GM12878 (cell line): ENCODE measurements at regions of chr5 and their contacts with region 1.

Region 1: DNA sequence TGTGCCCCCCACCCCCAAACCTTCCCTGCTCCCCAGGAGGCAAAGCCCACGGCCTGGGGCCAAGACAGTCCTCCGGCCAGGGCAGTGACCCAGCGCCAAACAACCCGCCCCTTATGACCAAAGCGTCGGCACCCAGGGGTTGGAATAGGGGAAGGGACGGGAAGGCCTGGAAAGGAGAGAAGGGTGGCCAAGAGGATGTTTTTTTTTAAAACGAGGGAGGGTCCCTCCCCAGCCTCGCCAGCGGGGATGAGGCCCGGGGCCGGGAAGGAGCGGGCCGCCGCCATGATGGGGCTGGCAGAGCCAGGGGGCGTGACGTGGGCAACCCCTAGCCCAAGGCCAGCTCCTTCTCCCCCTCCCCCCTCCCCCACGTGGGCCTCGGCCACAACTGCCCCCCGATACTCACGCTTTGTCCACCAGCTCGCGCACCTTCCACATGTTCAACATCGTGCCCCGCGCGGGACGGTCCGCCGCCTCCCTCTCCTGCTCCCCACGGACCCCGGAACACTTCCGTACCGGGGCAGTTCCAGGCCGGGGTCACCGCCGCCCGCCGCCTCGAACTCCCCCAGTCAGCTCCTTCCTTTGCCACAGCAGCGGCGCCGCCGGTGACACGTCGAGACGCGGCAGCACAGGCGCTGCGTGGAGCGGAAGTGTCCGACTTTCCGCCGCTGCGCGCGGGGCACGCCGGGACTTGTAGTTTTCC is at the start of gene CLINT1:
- DNase-seq: no peak
- ATAC-seq: peak; percentile 69
- H3K4me3 ChIP-seq: peak within 1 kb of the TSS; percentile 87
- H3K27ac ChIP-seq: peak within 1 kb of the TSS; percentile 45
- H3K4me1 ChIP-seq: peaks cover 29% of the 10 kb centered on the region
- H3K27me3 ChIP-seq: no peaks in the 10 kb centered on the region
- CTCF ChIP-seq: no peak
- EP300 ChIP-seq: 0 out of 4 replicates have a peak, but pooled peaks of 1 of the 2 experiments have one; percentile 4
- POLR2A ChIP-seq: peak; percentile 82
- RAD21 ChIP-seq: no peak
- polyA plus RNA-seq, gene CLINT1: 30.0 to 40.2 TPM

Region 2: GRCh38 chr5:157828944-157829632 is 29.6 kb before region 1 on chr5:
- CTCF ChIA-PET with region 1: interaction called, 48 read pairs
- POLR2A ChIA-PET with region 1: interaction called, 5 read pairs
- RAD21 ChIA-PET with region 1: interaction called, 12 read pairs
- SMC1A ChIA-PET with region 1: interaction called, 14 read pairs
- in situ Hi-C with region 1: no loop called
- intact Hi-C with region 1: no loop called
- DNase-seq: no peak
- ATAC-seq: peak; percentile 71
- H3K4me3 ChIP-seq: no peak overlapping the region
- H3K27ac ChIP-seq: no peak overlapping the region
- H3K4me1 ChIP-seq: peaks cover 8% of the 10 kb centered on the region
- H3K27me3 ChIP-seq: no peaks in the 10 kb centered on the region
- CTCF ChIP-seq: peak; percentile 34 to 52 (median 35); a peak in 5 of 6 replicates
- EP300 ChIP-seq: no peak
- POLR2A ChIP-seq: no peak
- RAD21 ChIP-seq: no peak

Region 3: DNA sequence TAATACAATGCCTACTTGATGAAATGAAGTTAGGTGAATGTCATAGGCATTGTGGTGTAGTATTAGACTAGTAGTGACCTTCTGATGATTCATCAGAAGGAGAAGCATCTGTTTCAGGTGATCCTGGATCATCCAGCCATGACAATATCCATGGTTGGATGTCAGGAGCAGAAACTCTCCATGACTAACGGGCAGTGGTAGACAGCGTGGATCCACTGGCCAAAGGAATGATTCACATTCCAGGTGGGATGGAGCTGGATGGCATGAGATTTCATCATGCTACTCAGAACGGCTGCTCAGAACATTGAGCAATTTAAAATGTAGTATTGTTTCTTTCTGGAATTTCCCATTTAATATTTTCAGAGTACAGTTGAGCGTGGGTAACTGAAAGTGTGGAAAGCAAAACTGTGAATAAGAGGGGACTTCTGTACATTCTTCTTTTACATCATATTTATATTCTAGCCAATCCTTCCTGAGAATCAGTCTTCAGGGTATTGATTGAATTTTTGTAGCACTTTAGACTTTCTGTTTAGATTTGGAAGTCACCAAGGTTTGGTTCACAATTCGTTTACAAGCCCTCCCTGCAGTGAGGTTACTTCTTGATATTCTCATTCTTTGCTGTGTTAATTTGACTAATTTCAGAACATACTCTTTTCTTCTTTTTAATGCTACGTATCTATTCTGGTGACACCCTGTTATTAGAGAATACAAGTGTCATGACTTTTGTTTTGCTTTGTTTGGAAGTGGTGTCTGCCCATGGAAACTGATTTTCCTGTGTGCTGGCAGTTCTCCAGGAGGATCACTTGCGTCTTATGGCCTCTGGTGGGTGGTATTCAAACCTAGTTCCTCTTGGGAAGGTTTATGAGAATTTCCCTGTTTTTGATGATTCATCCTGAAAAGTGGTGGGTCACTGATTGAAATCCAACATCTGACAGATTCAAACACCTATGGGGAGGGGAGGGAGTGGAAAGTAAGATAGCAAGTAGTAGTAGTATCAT is 12.5 kb after region 1 on chr5:
- CTCF ChIA-PET with region 1: interaction called, 6 read pairs
- POLR2A ChIA-PET with region 1: interaction called, 6 read pairs
- RAD21 ChIA-PET with region 1: interaction called, 14 read pairs
- SMC1A ChIA-PET with region 1: interaction called, 21 read pairs
- in situ Hi-C with region 1: no loop called
- intact Hi-C with region 1: loop called (anchors 1 kb)
- DNase-seq: no peak
- ATAC-seq: peak; percentile 78
- H3K4me3 ChIP-seq: no peak overlapping the region
- H3K27ac ChIP-seq: no peak overlapping the region
- H3K4me1 ChIP-seq: peaks cover 15% of the 10 kb centered on the region
- H3K27me3 ChIP-seq: peaks cover 0 to 6% of the 10 kb centered on the region in 2 experiments; a peak in 2 of 4 replicates
- CTCF ChIP-seq: no peak
- EP300 ChIP-seq: peak; percentile 13 to 27; a peak in 2 of 4 replicates
- POLR2A ChIP-seq: no peak
- RAD21 ChIP-seq: no peak

Region 4: GRCh38 chr5:157917899-157918809 is 59.5 kb after region 1 on chr5:
- CTCF ChIA-PET with region 1: interaction called, 166 read pairs
- POLR2A ChIA-PET with region 1: interaction called, 7 read pairs
- RAD21 ChIA-PET with region 1: interaction called, 66 read pairs
- SMC1A ChIA-PET with region 1: interaction called, 150 read pairs
- in situ Hi-C with region 1: loop called (anchors 5 kb)
- intact Hi-C with region 1: loop called (anchors 1 kb)
- DNase-seq: no peak
- ATAC-seq: peak; percentile 92
- H3K4me3 ChIP-seq: no peak overlapping the region
- H3K27ac ChIP-seq: no peak overlapping the region
- H3K4me1 ChIP-seq: no peaks in the 10 kb centered on the region; the same call in 1 of the 2 replicates
- H3K27me3 ChIP-seq: no peaks in the 10 kb centered on the region
- CTCF ChIP-seq: peak; percentile 64 to 71 (median 65)
- EP300 ChIP-seq: no peak
- POLR2A ChIP-seq: no peak
- RAD21 ChIP-seq: peak; percentile 81

Region 5: GRCh38 chr5:157994906-157995519 is 136.3 kb after region 1 on chr5:
- CTCF ChIA-PET with region 1: interaction called, 20 read pairs
- POLR2A ChIA-PET with region 1: no interaction called
- RAD21 ChIA-PET with region 1: interaction called, 3 read pairs
- SMC1A ChIA-PET with region 1: interaction called, 4 read pairs
- in situ Hi-C with region 1: no loop called
- intact Hi-C with region 1: loop called (anchors 1 kb)
- DNase-seq: peak; percentile 3
- ATAC-seq: peak; percentile 98
- H3K4me3 ChIP-seq: no peak overlapping the region
- H3K27ac ChIP-seq: no peak overlapping the region
- H3K4me1 ChIP-seq: no peaks in the 10 kb centered on the region
- H3K27me3 ChIP-seq: no peaks in the 10 kb centered on the region
- CTCF ChIP-seq: peak; percentile 75 to 83 (median 82)
- EP300 ChIP-seq: no peak
- POLR2A ChIP-seq: no peak
- RAD21 ChIP-seq: peak; percentile 76